Common myeloid progenitor, CD34-positive (primary cell): ENCODE measurements at regions of chr13 and their contacts with region 1.

Region 1: DNA sequence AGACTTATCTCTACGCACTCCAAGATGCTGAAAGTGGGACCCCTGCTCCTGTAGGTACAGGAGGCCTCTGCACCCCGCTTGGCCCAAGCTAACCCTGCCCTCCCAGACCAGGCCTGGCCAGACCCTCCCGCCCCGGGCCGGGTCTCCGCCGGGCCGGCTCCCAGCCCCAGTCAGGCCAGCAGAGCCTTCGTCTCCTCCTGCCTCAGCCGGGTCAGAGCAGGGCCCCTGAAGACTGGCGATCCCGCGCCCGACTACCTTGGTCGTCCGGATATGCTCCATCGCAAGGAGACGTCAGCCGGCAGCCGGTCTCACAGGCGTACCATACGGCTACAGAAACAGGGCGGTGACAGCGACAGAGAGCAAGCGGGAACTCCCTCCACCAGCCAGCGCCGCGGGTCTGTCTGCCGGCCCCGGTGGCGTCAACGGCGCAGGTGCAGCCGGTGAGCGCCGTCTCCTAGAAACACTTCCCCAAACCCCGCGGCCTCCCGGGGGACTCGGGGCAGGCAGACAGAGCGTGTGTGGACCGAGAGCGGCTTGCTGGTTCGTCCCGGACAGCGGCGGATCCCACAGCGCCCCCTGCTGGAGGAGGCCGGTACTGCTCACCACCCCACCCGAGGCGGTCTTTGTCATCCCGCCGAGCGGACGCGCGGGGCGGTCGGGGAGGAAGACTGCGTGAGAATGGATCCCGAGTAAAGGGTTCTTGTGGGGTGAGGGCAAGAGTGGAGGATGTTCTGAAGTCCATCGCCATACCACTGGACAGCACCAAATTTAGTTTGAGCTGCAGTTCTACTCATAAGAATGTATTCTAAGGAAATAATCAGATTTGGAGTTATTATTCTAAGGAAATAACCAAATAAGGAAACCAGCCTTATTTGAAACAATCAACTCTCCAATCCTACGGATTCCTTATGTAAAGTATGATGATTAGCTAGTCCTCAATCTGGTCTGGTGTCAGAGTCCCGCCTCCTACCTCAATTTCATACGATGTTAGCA is at the start of gene MTMR6:
- DNase-seq: peak; percentile 96 to 98 (median 96)
- H3K4me3 ChIP-seq: peak within 1 kb of the TSS; percentile 80 to 99 (median 96)
- H3K27ac ChIP-seq: peak within 1 kb of the TSS; percentile 97 to 98
- H3K4me1 ChIP-seq: peaks cover 10 to 25% (median 16%) of the 10 kb centered on the region in 4 experiments
- H3K27me3 ChIP-seq: peaks cover 0 to 16% (median 7%) of the 10 kb centered on the region in 5 experiments

Region 2: DNA sequence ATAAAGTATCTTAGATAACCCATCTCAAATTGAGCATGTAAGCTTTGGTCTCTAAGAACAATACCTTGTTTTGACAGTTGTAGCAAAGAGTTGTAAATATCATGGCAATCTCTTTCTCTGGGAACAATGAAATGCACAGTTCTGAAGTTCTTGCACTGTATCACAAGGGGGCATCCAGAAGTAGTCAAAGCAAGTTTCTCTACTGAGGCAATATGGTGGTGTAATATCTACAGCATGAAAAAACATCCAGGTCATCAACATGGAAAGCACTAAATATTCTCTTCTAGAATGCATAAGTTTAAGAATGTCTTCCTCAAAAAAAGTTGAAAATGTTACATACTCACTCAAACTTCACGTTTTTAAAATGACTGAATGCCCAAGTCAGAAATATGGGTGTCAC is 19.6 kb before region 1 on chr13:
- CTCF ChIA-PET with region 1: interaction called, 19 read pairs
- POLR2A ChIA-PET with region 1: no interaction called
- DNase-seq: peak; percentile 38 to 63 (median 63)
- H3K4me3 ChIP-seq: no peak overlapping the region
- H3K27ac ChIP-seq: no peak overlapping the region
- H3K4me1 ChIP-seq: no peaks in the 10 kb centered on the region
- H3K27me3 ChIP-seq: no peaks in the 10 kb centered on the region